ENCODE measurements at regions of chr6 and their contacts with region 1.

Region 1: GRCh38 chr6:134152767-134153485 is 100.5 kb upstream of the SLC2A12 start:
- DNase-seq: no peak
- H3K4me3 ChIP-seq: no peak overlapping the region
- H3K27ac ChIP-seq: no peak overlapping the region
- H3K4me1 ChIP-seq: no peaks in the 10 kb centered on the region
- H3K27me3 ChIP-seq: no peaks in the 10 kb centered on the region
- CTCF ChIP-seq: no peak
- POLR2A ChIP-seq: no peak

Region 2: DNA sequence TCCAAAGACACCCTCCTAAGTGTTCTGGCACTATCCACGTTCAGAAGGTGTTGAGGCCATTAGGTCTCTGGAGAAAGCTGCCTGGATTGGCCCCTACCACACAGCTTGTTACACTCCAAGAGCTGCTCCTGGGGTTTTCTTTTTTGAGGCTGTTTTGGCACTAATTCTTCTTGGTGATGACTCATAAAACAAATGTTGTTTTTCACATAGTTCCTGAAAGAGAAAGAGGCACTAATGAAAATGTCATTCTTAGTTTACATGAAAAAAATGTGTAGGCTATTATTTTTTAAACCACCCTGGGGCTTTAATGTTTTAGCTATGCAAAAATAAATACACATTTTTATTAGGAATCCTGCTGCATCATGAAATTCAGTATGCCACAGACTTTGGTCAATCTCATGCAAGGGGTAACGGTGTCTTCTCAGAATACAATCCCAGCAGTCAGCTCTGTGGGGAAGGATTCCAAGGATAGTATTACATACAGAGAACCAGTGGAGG is 161.8 kb before region 1 on chr6:
- intact Hi-C with region 1: no loop called
- DNase-seq: no peak
- H3K4me3 ChIP-seq: no peak overlapping the region
- H3K27ac ChIP-seq: peak overlapping the region in 1 of 4 donors; percentile 21
- H3K4me1 ChIP-seq: peaks cover 3 to 27% (median 10%) of the 10 kb centered on the region in 3 donors
- H3K27me3 ChIP-seq: no peaks in the 10 kb centered on the region
- CTCF ChIP-seq: no peak
- POLR2A ChIP-seq: no peak

Region 3: GRCh38 chr6:134272374-134272773 is 119.4 kb after region 1 on chr6:
- intact Hi-C with region 1: no loop called
- DNase-seq: no peak
- H3K4me3 ChIP-seq: no peak overlapping the region
- H3K27ac ChIP-seq: no peak overlapping the region
- H3K4me1 ChIP-seq: peaks cover 0 to 18% (median 10%) of the 10 kb centered on the region in 3 donors
- H3K27me3 ChIP-seq: no peaks in the 10 kb centered on the region
- CTCF ChIP-seq: no peak
- POLR2A ChIP-seq: no peak

Region 4: DNA sequence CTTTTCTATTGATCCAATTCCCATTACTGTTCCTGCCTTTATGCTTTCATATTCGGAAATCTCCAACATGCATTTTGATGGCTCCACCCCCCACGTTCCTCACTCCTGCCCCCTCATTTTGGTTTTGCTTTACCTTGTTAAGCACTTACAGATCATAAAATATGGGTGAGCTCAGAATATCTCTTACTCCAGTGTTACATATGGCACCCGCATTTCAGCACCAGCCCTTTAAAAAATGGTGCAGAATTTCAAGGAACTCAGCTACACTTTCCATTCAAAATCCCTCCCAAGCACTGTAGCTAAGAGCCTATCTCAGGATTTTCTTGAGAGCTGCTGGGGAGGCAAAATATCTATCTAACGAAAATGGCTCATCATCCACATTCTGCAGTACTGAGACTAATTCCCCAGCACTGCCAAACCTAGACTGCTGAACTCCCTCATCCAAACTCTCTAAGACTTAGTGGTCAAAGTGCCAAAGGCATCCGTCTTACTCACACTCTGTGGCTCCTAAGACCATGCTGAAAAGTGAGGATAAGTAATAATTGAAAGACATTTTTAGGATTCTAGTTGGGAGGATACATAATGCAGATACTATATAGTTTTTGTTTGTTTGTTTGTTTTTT is 157.2 kb after region 1 on chr6:
- intact Hi-C with region 1: no loop called
- DNase-seq: no peak
- H3K4me3 ChIP-seq: no peak overlapping the region
- H3K27ac ChIP-seq: peak overlapping the region in 1 of 4 donors; percentile 34
- H3K4me1 ChIP-seq: peaks cover 0 to 16% (median 4%) of the 10 kb centered on the region in 3 donors
- H3K27me3 ChIP-seq: no peaks in the 10 kb centered on the region
- CTCF ChIP-seq: no peak
- POLR2A ChIP-seq: no peak

Region 5: GRCh38 chr6:134949927-134950326 is 797.0 kb after region 1 on chr6 and contains the start of gene ALDH8A1:
- intact Hi-C with region 1: loop called (anchors 10 kb)
- DNase-seq: no peak
- H3K4me3 ChIP-seq: no peak within 1 kb of the TSS
- H3K27ac ChIP-seq: no peak within 1 kb of the TSS
- H3K4me1 ChIP-seq: no peaks in the 10 kb centered on the region
- H3K27me3 ChIP-seq: no peaks in the 10 kb centered on the region
- CTCF ChIP-seq: no peak
- POLR2A ChIP-seq: no peak
- total RNA-seq, gene ALDH8A1: 0.13 to 0.76 (median 0.62) TPM in 3 of 4 donors, not detected in the other

Measured in esophagus squamous epithelium (tissue), 5 donors.